Sigmoid colon (tissue), 7 donors: ENCODE measurements at regions of chr1 and their contacts with region 1.

Region 1: GRCh38 chr1:32521165-32521564 is 18.1 kb upstream of the ZBTB8A start:
- DNase-seq: no peak
- H3K4me3 ChIP-seq: no peak overlapping the region
- H3K27ac ChIP-seq: no peak overlapping the region
- H3K4me1 ChIP-seq: no peaks in the 10 kb centered on the region
- H3K27me3 ChIP-seq: no peaks in the 10 kb centered on the region
- CTCF ChIP-seq: no peak
- EP300 ChIP-seq: no peak
- POLR2A ChIP-seq: no peak

Region 2: DNA sequence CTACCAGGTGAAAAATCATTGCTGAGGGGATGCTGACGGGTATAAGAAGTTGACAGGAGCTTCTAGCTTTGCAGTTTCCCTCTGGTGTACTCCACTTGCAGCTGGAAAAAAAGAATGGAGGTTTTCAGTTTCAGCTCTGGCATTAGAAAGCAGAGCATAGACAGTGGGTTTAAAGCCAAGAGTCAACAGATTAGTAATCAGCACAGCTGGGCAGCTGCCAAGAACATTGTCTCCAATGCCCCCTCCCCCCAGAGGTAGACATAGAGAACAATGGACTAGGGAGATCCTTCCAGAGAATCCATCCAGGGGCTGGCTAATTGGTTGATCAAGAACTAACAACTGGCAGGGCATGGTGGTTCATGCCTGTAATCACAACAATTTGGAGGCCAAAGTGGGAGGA is 66.4 kb before region 1 on chr1:
- intact Hi-C with region 1: no loop called
- DNase-seq: no peak
- H3K4me3 ChIP-seq: no peak overlapping the region
- H3K27ac ChIP-seq: no peak overlapping the region
- H3K4me1 ChIP-seq: no peaks in the 10 kb centered on the region
- H3K27me3 ChIP-seq: no peaks in the 10 kb centered on the region
- CTCF ChIP-seq: no peak
- EP300 ChIP-seq: no peak
- POLR2A ChIP-seq: no peak

Region 3: DNA sequence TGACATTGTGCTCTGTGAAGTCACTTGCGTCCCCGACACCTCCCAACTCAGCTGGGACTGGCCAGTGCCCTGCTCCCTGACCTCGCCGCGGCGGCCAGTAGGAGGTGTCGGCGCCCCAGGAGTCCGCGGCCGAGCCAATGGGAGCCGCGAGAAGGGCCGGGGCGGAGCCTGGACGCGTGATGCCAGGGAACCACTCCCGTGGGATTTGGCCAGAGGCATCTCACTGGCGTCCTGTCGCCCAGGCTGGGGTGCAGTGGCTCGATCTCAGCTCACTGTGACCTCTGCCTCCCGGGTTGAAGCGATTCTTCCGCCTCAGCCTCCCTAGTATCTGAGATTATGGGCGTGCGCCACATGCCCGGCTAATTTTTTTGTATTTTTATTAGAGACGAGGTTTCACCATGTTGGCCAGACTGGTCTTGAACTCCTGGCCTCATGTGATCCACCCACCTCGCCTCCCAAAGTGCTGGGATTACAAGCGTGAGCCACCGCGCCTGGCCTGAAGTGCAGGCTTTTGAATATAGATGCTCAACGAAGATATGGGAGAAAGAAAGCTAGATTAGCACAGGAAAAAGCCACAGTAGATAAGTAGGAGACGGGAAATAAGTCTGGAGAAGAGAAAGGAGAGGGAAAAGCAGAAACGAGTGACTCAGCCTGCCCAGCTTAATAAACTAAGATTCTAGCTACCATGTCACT is 91.2 kb after region 1 on chr1:
- intact Hi-C with region 1: no loop called
- DNase-seq: peak; percentile 91
- H3K4me3 ChIP-seq: peak overlapping the region; percentile 32 to 56 (median 50)
- H3K27ac ChIP-seq: peak overlapping the region in 2 of 4 donors; percentile 23 to 26
- H3K4me1 ChIP-seq: peaks cover 0 to 12% (median 8%) of the 10 kb centered on the region in 4 donors
- H3K27me3 ChIP-seq: no peaks in the 10 kb centered on the region
- CTCF ChIP-seq: peak in 3 of 4 experiments; percentile 29 to 50 (median 32)
- EP300 ChIP-seq: no peak
- POLR2A ChIP-seq: peak in 1 of 2 donors; percentile 23

Region 4: GRCh38 chr1:32773018-32773763 is 252.0 kb after region 1 on chr1:
- intact Hi-C with region 1: loop called (anchors 10 kb)
- DNase-seq: peak; percentile 92
- H3K4me3 ChIP-seq: no peak overlapping the region
- H3K27ac ChIP-seq: no peak overlapping the region
- H3K4me1 ChIP-seq: peaks cover 0 to 7% (median 5%) of the 10 kb centered on the region in 4 donors
- H3K27me3 ChIP-seq: no peaks in the 10 kb centered on the region
- CTCF ChIP-seq: peak; percentile 75 to 93 (median 88)
- EP300 ChIP-seq: no peak
- POLR2A ChIP-seq: no peak